GM12878 (cell line): ENCODE measurements at regions of chr19 and their contacts with region 1.

Region 1: GRCh38 chr19:2788237-2788636 is 2.9 kb downstream of the THOP1 start:
- DNase-seq: no peak
- ATAC-seq: no peak
- H3K4me3 ChIP-seq: peak overlapping the region; percentile 87; the same call in 1 of the 2 replicates
- H3K27ac ChIP-seq: no peak overlapping the region; the same call in 1 of the 2 replicates
- H3K4me1 ChIP-seq: peaks cover 35% of the 10 kb centered on the region
- H3K27me3 ChIP-seq: no peaks in the 10 kb centered on the region
- CTCF ChIP-seq: no peak
- EP300 ChIP-seq: no peak
- POLR2A ChIP-seq: no peak
- RAD21 ChIP-seq: no peak

Region 2: GRCh38 chr19:2820112-2820702 is 32.0 kb after region 1 on chr19:
- CTCF ChIA-PET with region 1: interaction called, 4 read pairs
- POLR2A ChIA-PET with region 1: no interaction called
- RAD21 ChIA-PET with region 1: no interaction called
- SMC1A ChIA-PET with region 1: interaction called, 4 read pairs
- in situ Hi-C with region 1: no loop called
- intact Hi-C with region 1: loop called (anchors 2 kb)
- DNase-seq: no peak
- ATAC-seq: peak; percentile 6; the same call in 2 of the 3 replicates
- H3K4me3 ChIP-seq: peak overlapping the region; percentile 80
- H3K27ac ChIP-seq: no peak overlapping the region
- H3K4me1 ChIP-seq: no peaks in the 10 kb centered on the region
- H3K27me3 ChIP-seq: no peaks in the 10 kb centered on the region
- CTCF ChIP-seq: no peak
- EP300 ChIP-seq: no peak
- POLR2A ChIP-seq: no peak
- RAD21 ChIP-seq: no peak